ENCODE measurements at regions of chr17 and their contacts with region 1.

Region 1: DNA sequence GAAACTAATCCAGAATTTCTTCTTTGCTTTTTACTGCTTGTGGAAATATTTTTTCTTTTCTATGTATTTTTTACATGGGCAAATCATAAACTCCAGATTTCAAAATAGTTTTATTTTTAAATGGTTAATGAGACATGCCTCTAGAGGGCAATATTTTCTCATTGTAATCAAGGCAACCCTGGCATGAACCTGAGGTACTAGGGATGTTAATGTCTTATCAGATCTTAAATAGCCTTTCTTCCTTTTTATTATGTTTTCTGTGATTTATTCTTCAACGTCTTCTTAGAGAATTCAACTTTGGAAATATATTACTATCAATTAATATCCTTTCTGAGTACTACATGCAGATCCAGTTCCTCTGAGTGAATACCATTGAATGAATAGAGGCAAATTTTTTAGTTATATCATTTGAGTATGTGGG is 324.7 kb downstream of the BCAS3 start:
- DNase-seq: no peak
- H3K4me3 ChIP-seq: no peak overlapping the region
- H3K27ac ChIP-seq: no peak overlapping the region
- H3K4me1 ChIP-seq: peaks cover 0 to 5% (median 0%) of the 10 kb centered on the region in 3 donors
- H3K27me3 ChIP-seq: no peaks in the 10 kb centered on the region
- CTCF ChIP-seq: peak in 5 of 6 experiments; percentile 36 to 64 (median 48)
- POLR2A ChIP-seq: no peak

Region 2: DNA sequence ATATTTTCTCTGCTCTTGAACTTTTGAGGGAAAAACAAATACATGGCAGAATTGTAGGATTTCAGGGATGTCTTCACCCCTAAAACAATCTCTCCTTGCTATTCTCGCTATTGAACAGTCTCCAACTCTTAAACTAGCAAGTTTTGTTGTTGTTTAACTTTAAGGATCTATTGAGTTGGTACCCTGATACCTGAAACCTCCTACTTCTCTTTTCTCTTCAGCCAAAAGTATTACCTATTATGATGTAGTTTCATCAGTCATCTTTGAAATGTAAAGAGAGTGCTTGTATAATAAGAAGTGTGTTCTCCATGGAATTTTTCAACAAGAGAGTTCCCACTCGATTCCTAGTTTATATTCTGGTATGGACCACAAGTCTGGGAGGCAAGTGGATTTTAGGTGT is 185.8 kb after region 1 on chr17:
- intact Hi-C with region 1: no loop called
- DNase-seq: no peak
- H3K4me3 ChIP-seq: no peak overlapping the region
- H3K27ac ChIP-seq: no peak overlapping the region
- H3K4me1 ChIP-seq: no peaks in the 10 kb centered on the region
- H3K27me3 ChIP-seq: no peaks in the 10 kb centered on the region
- CTCF ChIP-seq: no peak
- POLR2A ChIP-seq: no peak

Region 3: GRCh38 chr17:61399131-61400057 is 397.1 kb after region 1 on chr17 and contains the start of gene TBX2:
- intact Hi-C with region 1: loop called (anchors 5 kb)
- DNase-seq: no peak
- H3K4me3 ChIP-seq: peak within 1 kb of the TSS; percentile 38 to 81 (median 53)
- H3K27ac ChIP-seq: peak within 1 kb of the TSS; percentile 79 to 92 (median 88)
- H3K4me1 ChIP-seq: peaks cover 46 to 85% (median 54%) of the 10 kb centered on the region in 3 donors
- H3K27me3 ChIP-seq: peaks cover 47 to 99% (median 58%) of the 10 kb centered on the region in 4 donors
- CTCF ChIP-seq: no peak
- POLR2A ChIP-seq: peak in 2 of 4 donors; percentile 45
- total RNA-seq, gene TBX2: 2.2 to 13.4 (median 4.2) TPM